CD4-positive, alpha-beta T cell (primary cell): ENCODE measurements at regions of chr17 and their contacts with region 1.

Region 1: GRCh38 chr17:46193626-46194392 is 580 bp upstream of the KANSL1 start:
- DNase-seq: peak; percentile 84 to 98 (median 94)
- ATAC-seq: peak; percentile 62
- H3K4me3 ChIP-seq: peak overlapping the region; percentile 90
- H3K4me3 Mint-ChIP-seq: peak overlapping the region; percentile 82
- H3K27ac ChIP-seq: peak overlapping the region; percentile 95 to 98
- H3K27ac Mint-ChIP-seq: peak overlapping the region; percentile 93
- H3K4me1 ChIP-seq: peaks cover 40% of the 10 kb centered on the region
- H3K4me1 Mint-ChIP-seq: peaks cover 71% of the 10 kb centered on the region
- H3K27me3 ChIP-seq: no peaks in the 10 kb centered on the region
- H3K27me3 Mint-ChIP-seq: no peaks in the 10 kb centered on the region
- CTCF ChIP-seq: no peak

Region 2: DNA sequence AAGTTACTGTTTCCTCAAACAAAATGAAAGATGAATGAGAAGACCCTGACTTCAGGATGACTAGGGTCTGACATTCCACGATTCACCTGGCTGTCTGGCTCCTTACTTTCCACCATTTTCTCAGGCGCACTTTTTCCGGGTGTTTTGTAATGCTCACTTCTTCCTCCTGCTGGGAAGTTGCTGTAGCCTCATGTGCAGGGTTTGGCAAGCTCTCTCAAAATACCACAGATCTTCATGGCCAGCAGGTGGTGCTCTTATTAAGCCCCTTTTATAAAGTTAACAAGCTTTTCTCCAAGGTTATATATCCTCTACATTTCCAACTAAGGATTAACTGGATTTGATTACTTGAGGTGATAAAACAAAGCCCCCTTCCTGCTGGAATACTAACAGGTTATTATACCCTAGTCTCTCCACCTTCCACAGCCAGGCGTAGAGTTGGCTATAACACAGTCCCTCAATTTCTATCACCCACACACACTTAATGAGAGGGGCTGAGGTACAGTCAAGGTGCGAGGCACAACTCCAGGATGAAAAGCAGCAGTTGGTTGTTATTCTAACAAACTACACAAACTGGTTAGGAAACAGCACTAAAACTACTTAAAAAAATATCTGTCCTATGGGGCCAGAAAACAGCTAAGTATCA is 149.4 kb before region 1 on chr17:
- CTCF ChIA-PET with region 1: interaction called, 16 read pairs
- POLR2A ChIA-PET with region 1: interaction called, 16 read pairs
- intact Hi-C with region 1: loop called (anchors 2 kb)
- DNase-seq: peak in 13 of 14 experiments; percentile 23 to 78 (median 48)
- ATAC-seq: peak; percentile 74
- H3K4me3 ChIP-seq: no peak overlapping the region
- H3K4me3 Mint-ChIP-seq: no peak overlapping the region
- H3K27ac ChIP-seq: no peak overlapping the region
- H3K27ac Mint-ChIP-seq: peak overlapping the region; percentile 54
- H3K4me1 ChIP-seq: no peaks in the 10 kb centered on the region
- H3K4me1 Mint-ChIP-seq: peaks cover 18% of the 10 kb centered on the region
- H3K27me3 ChIP-seq: no peaks in the 10 kb centered on the region
- H3K27me3 Mint-ChIP-seq: no peaks in the 10 kb centered on the region
- CTCF ChIP-seq: peak; percentile 80

Region 3: GRCh38 chr17:46115699-46116098 is 78.1 kb before region 1 on chr17:
- CTCF ChIA-PET with region 1: interaction called, 20 read pairs
- POLR2A ChIA-PET with region 1: interaction called, 7 read pairs
- intact Hi-C with region 1: no loop called
- DNase-seq: no peak
- ATAC-seq: no peak
- H3K4me3 ChIP-seq: no peak overlapping the region
- H3K4me3 Mint-ChIP-seq: no peak overlapping the region
- H3K27ac ChIP-seq: no peak overlapping the region
- H3K27ac Mint-ChIP-seq: peak overlapping the region; percentile 11
- H3K4me1 ChIP-seq: peaks cover 18% of the 10 kb centered on the region
- H3K4me1 Mint-ChIP-seq: peaks cover 88% of the 10 kb centered on the region
- H3K27me3 ChIP-seq: no peaks in the 10 kb centered on the region
- H3K27me3 Mint-ChIP-seq: no peaks in the 10 kb centered on the region
- CTCF ChIP-seq: no peak

Region 4: DNA sequence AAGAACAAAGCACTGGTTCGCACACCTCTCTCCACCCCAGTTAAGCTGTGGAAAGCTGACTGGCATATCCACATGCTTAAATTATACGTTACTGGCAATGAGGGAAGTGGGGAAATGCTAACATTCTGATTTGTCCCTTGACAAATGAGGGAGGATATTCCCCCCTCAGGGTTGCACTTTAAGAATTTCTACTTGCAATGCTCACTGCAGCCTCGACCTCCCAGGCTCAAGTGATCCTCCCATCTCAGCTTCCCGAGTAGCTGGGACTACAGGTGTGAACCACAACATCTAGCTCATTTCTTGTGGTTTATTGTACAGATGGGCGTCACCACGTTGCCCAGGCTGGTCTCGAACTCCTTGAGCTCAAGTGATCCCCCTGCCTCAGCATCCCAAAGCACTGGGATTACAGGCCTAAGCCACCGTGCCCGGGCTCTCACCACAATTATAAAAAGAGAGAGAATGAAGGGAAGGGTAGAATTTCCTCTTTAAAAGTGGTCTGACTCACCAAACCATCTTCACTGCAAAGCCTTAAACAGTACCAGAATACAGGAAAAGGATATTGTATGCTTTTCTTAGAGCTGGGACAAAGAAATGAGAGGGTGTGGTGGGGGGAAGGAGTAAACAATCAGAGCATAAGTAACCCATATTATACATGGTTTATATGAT is 39.5 kb before region 1 on chr17:
- CTCF ChIA-PET with region 1: interaction called, 35 read pairs
- POLR2A ChIA-PET with region 1: interaction called, 10 read pairs
- intact Hi-C with region 1: loop called in 1 of 2 experiments (anchors 5 kb)
- DNase-seq: peak in 5 of 14 experiments; percentile 11 to 61 (median 36)
- ATAC-seq: peak; percentile 69
- H3K4me3 ChIP-seq: no peak overlapping the region
- H3K4me3 Mint-ChIP-seq: peak overlapping the region; percentile 72
- H3K27ac ChIP-seq: peak overlapping the region in 1 of 2 donors; percentile 9
- H3K27ac Mint-ChIP-seq: peak overlapping the region; percentile 76
- H3K4me1 ChIP-seq: peaks cover 51% of the 10 kb centered on the region
- H3K4me1 Mint-ChIP-seq: peaks cover 89% of the 10 kb centered on the region
- H3K27me3 ChIP-seq: no peaks in the 10 kb centered on the region
- H3K27me3 Mint-ChIP-seq: no peaks in the 10 kb centered on the region
- CTCF ChIP-seq: no peak

Region 5: DNA sequence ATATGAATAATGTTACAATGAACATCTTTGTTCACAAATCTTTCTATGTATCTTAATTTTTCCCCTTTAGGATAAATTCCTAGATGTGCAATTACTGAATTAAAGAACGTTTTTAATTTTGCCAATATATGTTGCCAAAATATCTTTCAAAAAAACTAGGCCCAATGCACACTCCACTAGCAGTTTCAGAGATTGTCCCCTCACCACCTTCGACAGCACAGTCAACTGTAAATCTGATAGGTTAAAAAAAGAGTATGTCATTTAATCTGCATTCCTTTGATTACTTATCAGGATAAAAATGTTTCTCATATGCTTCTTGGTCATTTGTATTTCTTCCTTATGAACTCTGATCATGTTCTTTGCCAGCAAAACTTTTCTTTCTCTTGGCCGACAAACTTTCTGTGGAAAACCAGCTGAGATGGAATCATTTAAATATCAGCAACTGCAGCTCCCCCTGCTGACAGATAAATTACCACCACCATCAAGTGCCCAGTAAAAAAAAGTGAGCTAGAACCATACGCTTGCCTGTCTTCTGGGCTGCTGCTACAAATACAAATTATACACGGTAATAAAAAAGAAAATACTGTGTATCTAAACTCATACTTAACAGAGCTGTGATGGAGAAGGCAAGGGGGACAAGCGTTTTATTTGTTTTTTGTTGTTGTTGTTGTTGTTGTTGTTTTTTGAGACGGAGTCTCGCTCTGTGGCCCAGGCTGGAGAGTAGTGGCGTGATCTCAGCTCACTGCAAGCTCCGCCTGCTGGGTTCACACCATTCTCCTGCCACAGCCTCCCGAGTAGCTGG is 19.0 kb after region 1 on chr17:
- CTCF ChIA-PET with region 1: interaction called, 58 read pairs
- POLR2A ChIA-PET with region 1: interaction called, 36 read pairs
- intact Hi-C with region 1: loop called (anchors 1 kb)
- DNase-seq: peak in 13 of 14 experiments; percentile 33 to 89 (median 52)
- ATAC-seq: peak; percentile 93
- H3K4me3 ChIP-seq: no peak overlapping the region
- H3K4me3 Mint-ChIP-seq: no peak overlapping the region
- H3K27ac ChIP-seq: no peak overlapping the region
- H3K27ac Mint-ChIP-seq: peak overlapping the region; percentile 30
- H3K4me1 ChIP-seq: peaks cover 6% of the 10 kb centered on the region
- H3K4me1 Mint-ChIP-seq: peaks cover 22% of the 10 kb centered on the region
- H3K27me3 ChIP-seq: no peaks in the 10 kb centered on the region
- H3K27me3 Mint-ChIP-seq: no peaks in the 10 kb centered on the region
- CTCF ChIP-seq: peak; percentile 81